IMR-90 (cell line): ENCODE measurements at regions of chr10 and their contacts with region 1.

Region 1: DNA sequence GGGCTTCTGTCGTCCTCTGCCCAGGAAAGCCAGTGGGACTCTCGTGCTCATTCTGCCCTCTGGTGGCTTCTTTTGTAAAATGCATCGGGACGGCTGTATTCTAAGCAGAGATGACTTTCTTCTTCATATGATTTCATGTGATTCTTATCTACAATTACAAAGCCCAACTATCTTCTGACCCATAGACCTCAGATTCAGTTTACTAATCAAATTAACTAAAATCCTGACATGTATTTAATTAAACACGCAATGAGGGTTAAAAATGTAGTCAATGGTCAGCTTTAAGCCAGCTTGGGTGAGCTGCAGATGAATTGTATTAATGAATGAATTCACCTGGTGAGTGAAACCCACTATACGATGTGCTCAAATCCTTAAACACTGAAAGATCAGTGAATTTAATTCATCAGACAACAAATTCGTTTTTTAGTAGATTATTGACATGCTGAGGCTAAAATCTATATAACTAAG is 117.6 kb upstream of the FAM204A start:
- DNase-seq: peak; percentile 39
- ATAC-seq: peak; percentile 98
- H3K4me3 ChIP-seq: no peak overlapping the region
- H3K27ac ChIP-seq: no peak overlapping the region
- H3K4me1 ChIP-seq: no peaks in the 10 kb centered on the region
- H3K27me3 ChIP-seq: no peaks in the 10 kb centered on the region
- CTCF ChIP-seq: peak; percentile 69
- POLR2A ChIP-seq: no peak
- RAD21 ChIP-seq: peak; percentile 67

Region 2: DNA sequence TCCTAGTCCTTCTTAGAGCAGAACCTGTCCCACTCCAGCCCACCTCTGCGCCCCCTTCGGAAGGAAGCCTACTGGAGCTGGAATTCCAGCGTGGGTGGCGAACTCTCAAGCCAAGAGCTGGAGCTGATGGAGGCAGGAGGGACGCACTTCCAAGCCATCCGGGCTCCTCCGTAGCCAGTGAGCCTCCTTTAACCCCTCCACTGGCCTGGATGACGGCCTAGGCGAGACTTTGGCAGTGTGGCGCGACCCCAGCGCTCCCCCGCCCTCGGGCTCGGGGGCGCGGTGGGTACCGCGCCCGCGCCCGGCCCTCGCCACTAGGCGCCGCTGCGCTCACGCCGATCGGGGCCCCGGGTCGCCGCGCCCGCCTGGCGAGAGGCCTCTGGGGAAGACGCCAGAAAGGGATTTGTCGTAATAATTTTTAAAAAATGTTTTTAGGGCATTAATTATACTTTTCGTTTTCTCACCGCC is 922.3 kb before region 1 on chr10:
- CTCF ChIA-PET with region 1: no interaction called
- POLR2A ChIA-PET with region 1: no interaction called
- dilution Hi-C with region 1: no loop called
- in situ Hi-C with region 1: no loop called
- intact Hi-C with region 1: loop called (anchors 2 kb)
- DNase-seq: no peak
- ATAC-seq: peak; percentile 74
- H3K4me3 ChIP-seq: no peak overlapping the region
- H3K27ac ChIP-seq: no peak overlapping the region
- H3K4me1 ChIP-seq: no peaks in the 10 kb centered on the region
- H3K27me3 ChIP-seq: peaks cover 92% of the 10 kb centered on the region
- CTCF ChIP-seq: peak; percentile 67
- POLR2A ChIP-seq: no peak
- RAD21 ChIP-seq: peak; percentile 70

Region 3: DNA sequence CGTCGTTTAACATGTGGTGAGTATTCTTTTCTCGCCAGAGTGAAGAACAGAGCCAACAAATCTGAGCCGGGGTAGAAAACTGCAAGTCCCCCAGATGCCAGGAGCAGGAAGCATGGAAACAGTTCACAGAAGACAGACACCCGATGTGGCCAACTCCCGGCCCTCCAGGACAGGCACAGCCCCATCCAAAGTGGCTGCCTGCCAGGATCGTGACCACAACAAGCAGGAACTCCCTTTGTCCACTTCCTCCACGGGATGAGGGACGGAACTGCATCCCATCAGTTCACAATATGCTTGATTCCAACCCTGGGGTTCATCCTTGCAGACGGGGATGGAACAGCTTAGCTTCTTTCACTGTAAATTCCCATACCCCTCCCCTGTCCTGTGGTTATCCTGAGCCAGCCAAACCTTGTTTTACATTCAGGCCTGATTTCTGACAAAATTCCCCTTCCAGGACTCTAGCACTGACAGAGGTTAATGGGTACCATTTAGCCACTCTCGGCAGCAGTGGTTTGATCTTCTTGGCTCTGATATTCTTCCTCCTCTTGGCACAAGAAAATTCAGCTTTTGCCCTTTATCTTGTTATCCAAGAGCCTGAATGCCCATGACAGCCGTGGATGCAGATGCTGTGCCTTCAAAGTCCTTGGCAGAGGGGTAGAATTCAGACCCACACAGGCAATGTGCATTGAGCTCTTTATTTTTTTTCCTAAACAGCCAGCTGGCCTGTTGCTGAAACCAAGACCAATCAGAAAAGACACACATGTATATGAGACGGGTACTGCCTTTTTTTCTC is 12.1 kb before region 1 on chr10:
- CTCF ChIA-PET with region 1: interaction called, 11 read pairs
- POLR2A ChIA-PET with region 1: no interaction called
- dilution Hi-C with region 1: no loop called
- in situ Hi-C with region 1: no loop called
- intact Hi-C with region 1: no loop called
- DNase-seq: no peak
- ATAC-seq: no peak
- H3K4me3 ChIP-seq: no peak overlapping the region
- H3K27ac ChIP-seq: no peak overlapping the region
- H3K4me1 ChIP-seq: no peaks in the 10 kb centered on the region
- H3K27me3 ChIP-seq: peaks cover 2% of the 10 kb centered on the region; the same call in 1 of the 2 replicates
- CTCF ChIP-seq: no peak
- POLR2A ChIP-seq: no peak
- RAD21 ChIP-seq: no peak

Region 4: GRCh38 chr10:118720685-118721538 is 261.2 kb after region 1 on chr10:
- CTCF ChIA-PET with region 1: no interaction called
- POLR2A ChIA-PET with region 1: no interaction called
- dilution Hi-C with region 1: no loop called
- in situ Hi-C with region 1: no loop called
- intact Hi-C with region 1: loop called (anchors 5 kb)
- DNase-seq: peak; percentile 62
- ATAC-seq: peak; percentile 82
- H3K4me3 ChIP-seq: no peak overlapping the region
- H3K27ac ChIP-seq: no peak overlapping the region
- H3K4me1 ChIP-seq: peaks cover 9% of the 10 kb centered on the region
- H3K27me3 ChIP-seq: no peaks in the 10 kb centered on the region
- CTCF ChIP-seq: peak; percentile 86
- POLR2A ChIP-seq: no peak
- RAD21 ChIP-seq: peak; percentile 82